Calu3 (cell line): ENCODE measurements at regions of chr13 and their contacts with region 1.

Region 1: GRCh38 chr13:95191821-95192563 is 109.3 kb downstream of the ABCC4 start:
- DNase-seq: peak; percentile 67
- H3K4me3 Mint-ChIP-seq: no peak overlapping the region
- H3K27ac Mint-ChIP-seq: no peak overlapping the region
- H3K4me1 Mint-ChIP-seq: no peaks in the 10 kb centered on the region
- H3K27me3 Mint-ChIP-seq: no peaks in the 10 kb centered on the region
- CTCF ChIP-seq: peak; percentile 37

Region 2: DNA sequence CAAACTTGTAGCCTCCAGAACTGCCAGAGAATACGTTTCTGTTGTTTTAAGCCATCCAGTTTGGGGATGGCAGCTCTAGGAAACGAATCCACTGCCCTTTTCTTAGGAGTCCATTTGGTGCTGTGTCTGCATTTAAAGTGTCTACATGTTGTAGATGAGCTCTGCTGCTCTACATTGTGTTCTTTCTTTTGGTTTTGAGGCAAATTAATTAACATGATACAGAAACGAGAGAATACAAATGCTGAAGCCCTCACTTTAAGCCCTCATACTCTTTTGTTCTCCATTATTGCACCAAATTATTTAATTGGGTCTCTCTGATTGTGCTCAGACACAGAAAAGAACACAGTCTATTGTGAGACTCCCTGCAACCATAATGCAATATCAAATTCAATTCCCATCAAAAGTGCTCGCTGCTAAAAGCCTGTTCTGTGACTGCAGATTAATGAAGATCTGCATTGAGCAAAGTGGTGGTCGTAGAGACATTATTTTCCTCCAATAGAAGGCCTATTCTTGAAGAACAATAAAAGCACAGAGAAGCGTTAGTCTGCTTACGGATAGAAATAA is 313.3 kb before region 1 on chr13:
- CTCF ChIA-PET with region 1: no interaction called
- intact Hi-C with region 1: no loop called
- DNase-seq: no peak
- H3K4me3 Mint-ChIP-seq: no peak overlapping the region
- H3K27ac Mint-ChIP-seq: no peak overlapping the region
- H3K4me1 Mint-ChIP-seq: no peaks in the 10 kb centered on the region
- H3K27me3 Mint-ChIP-seq: no peaks in the 10 kb centered on the region
- CTCF ChIP-seq: no peak

Region 3: GRCh38 chr13:95275322-95276036 is 83.5 kb after region 1 on chr13:
- CTCF ChIA-PET with region 1: no interaction called
- intact Hi-C with region 1: loop called (anchors 10 kb)
- DNase-seq: no peak
- H3K4me3 Mint-ChIP-seq: no peak overlapping the region
- H3K27ac Mint-ChIP-seq: no peak overlapping the region
- H3K4me1 Mint-ChIP-seq: peaks cover 13% of the 10 kb centered on the region
- H3K27me3 Mint-ChIP-seq: no peaks in the 10 kb centered on the region
- CTCF ChIP-seq: no peak

Region 4: DNA sequence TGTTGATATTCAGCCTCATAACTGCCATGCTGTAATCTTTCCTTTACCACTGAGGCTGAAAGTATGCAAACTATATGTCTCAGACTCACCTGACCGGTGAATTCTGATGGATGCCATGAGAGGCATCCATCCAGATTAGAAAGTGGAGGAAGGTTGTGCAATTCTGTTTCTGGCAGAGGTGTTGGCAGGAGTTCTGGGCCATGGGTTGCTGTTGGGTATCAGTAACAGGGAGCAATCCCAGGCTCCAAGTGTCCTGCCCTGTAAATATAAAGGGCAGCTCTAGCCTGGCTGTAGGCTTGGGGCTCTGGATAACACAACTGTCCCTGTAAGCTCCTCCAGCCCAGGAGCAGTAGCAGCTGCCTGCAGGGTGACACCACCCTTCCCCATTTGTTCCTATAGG is 186.6 kb after region 1 on chr13:
- CTCF ChIA-PET with region 1: interaction called, 15 read pairs
- intact Hi-C with region 1: loop called (anchors 1 kb)
- DNase-seq: no peak
- H3K4me3 Mint-ChIP-seq: no peak overlapping the region
- H3K27ac Mint-ChIP-seq: no peak overlapping the region
- H3K4me1 Mint-ChIP-seq: no peaks in the 10 kb centered on the region
- H3K27me3 Mint-ChIP-seq: no peaks in the 10 kb centered on the region
- CTCF ChIP-seq: no peak

Region 5: DNA sequence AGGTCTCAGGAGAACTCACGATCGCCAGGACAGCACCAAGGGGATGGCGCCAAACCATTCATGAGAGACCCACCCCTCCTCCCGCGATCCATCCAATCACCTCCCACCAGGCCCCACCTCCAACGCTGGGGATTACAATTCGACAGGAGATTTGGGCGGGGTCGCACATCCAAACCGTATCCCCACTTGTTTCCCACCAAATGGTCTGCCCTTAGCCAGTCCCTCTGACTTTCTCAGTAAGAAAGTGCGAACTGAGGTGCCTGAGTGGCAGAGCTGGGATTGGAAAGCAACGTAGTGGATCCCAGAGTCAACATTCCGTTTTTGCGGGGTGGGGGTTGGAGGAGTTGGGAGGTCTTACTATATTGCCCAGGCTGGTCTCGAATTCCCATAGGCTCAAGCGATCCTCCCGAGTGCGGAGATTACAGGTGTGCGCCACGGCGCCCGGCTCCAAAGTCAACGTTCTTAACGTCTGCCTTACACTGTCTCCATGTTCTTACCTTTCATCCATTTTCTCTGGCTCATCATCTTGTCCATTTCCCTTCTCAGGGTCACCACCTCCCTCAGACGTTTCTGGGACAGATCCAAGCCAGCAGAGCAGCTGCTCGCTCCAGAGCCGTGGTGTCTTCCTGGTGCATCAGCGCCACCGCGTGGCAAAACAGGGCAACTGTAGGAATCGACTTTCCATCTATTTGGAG is 212.0 kb after region 1 on chr13:
- CTCF ChIA-PET with region 1: interaction called, 14 read pairs
- intact Hi-C with region 1: loop called (anchors 1 kb)
- DNase-seq: peak; percentile 55
- H3K4me3 Mint-ChIP-seq: peak overlapping the region; percentile 36
- H3K27ac Mint-ChIP-seq: no peak overlapping the region
- H3K4me1 Mint-ChIP-seq: no peaks in the 10 kb centered on the region
- H3K27me3 Mint-ChIP-seq: no peaks in the 10 kb centered on the region
- CTCF ChIP-seq: peak; percentile 40

Region 6: DNA sequence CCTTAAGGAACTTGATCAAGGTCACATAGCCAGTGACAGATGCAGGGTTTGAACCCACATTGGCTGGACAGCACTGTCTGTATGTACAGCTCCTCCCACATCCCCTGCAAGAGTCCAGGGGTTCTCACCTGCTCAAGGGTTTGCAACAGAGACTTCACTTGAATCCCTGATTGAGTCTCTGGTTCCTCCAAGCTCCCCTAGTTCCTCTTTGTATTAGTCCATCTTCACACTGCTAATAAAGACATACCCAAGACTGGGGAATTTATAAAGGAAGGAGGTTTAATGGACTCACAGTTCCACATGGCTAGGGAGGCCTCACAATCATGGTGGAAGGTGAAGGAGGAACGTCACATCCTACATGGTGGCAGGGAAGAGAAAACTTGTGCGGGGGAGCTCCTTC is 287.7 kb after region 1 on chr13:
- CTCF ChIA-PET with region 1: no interaction called
- intact Hi-C with region 1: loop called (anchors 2 kb)
- DNase-seq: no peak
- H3K4me3 Mint-ChIP-seq: no peak overlapping the region
- H3K27ac Mint-ChIP-seq: no peak overlapping the region
- H3K4me1 Mint-ChIP-seq: no peaks in the 10 kb centered on the region
- H3K27me3 Mint-ChIP-seq: no peaks in the 10 kb centered on the region
- CTCF ChIP-seq: no peak